Breast epithelium (tissue), 4 donors: ENCODE measurements at regions of chr1 and their contacts with region 1.

Region 1: DNA sequence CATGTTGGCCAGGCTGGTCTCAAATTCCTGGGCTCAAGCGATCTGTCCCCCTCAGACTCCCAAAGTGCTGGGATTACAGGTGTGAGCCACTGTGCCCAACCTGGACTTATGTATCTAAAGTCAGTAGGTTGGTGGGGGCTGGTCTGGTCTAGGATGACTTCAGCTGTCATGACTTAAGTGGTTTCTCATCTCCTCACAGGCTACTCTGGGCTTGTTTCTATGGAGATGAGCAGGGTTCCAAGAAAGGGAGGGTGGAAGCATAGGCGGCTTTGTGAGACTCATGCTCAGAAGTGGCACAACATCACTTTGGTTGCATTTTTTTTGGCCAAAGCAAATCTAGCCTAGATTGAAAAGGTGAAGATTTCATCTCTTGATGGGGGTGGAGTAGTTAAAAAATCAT is 115.9 kb upstream of the IVNS1ABP start:
- DNase-seq: no peak
- H3K4me3 ChIP-seq: no peak overlapping the region
- H3K27ac ChIP-seq: no peak overlapping the region
- H3K4me1 ChIP-seq: no peaks in the 10 kb centered on the region
- H3K27me3 ChIP-seq: no peaks in the 10 kb centered on the region
- CTCF ChIP-seq: no peak
- POLR2A ChIP-seq: no peak

Region 2: DNA sequence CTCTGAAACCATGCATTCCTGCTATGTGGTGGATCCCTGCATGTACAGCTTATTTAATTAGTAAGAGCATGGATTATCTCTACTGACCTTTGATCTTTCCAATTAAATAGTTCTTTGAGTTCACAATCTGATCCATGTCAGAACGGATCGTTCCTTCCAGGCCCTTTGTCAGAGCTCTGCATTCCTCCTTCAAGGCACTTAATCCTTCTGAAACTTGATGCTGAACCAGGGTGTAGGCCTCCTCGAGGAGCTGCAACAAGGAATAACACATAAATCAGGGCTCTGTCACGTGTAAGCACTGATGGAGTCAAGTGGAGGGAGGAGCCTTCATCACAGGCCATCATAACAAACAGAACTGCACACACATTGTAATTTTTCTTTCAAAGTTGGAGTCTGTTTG is 609.9 kb before region 1 on chr1:
- intact Hi-C with region 1: loop called (anchors 5 kb)
- DNase-seq: no peak
- H3K4me3 ChIP-seq: no peak overlapping the region
- H3K27ac ChIP-seq: no peak overlapping the region
- H3K4me1 ChIP-seq: peaks cover 0 to 7% of the 10 kb centered on the region in 2 donors
- H3K27me3 ChIP-seq: no peaks in the 10 kb centered on the region
- CTCF ChIP-seq: no peak
- POLR2A ChIP-seq: no peak